ENCODE measurements at regions of chr7 and their contacts with region 1.

Region 1: DNA sequence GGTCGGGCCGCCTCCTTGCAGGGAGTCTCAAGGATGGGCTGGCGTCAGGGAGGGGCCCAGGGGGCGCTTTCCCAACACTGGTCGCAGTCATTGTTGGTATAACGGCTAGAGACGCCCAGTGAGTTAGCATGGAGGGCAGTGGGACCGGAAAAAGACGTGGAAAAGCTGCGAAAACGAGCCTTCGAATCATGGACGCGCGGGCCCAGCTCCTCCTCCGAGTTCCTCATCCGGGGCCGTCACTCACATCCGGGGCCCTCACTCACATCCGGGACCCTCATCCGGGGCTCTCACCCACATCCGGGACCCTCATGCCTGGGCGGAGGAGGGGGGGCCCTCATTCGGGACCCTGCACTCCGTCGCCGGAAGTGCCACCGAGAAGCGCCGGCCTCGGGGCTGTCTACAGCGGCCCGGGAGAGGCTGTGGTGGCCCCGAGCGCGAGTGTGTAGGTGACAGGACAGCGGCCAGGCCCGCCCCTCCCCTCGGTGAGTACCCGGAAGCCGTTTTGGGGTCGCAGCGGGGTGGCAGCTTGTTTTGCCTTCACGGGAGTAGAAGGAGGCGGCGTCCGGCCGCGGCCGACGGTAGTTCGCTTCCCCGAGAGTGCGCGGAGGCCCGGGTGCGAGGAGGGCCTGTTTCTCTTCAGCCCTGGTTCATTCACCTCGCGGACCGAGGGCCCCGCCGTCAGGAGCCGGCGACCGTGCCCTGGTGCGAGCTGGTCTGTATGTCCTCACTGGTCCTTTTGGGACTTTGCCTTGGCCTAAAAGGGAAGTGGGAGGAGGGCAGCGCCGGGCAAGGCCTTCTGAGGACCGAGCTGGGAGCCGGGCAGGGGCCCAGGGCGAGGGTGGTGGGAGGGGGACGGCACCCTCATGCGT is at the start of gene ZNF655:
- DNase-seq: peak; percentile 82 to 98 (median 95)
- ATAC-seq: peak; percentile 85
- H3K4me3 Mint-ChIP-seq: peak within 1 kb of the TSS; percentile 91 to 100 (median 99)
- H3K27ac Mint-ChIP-seq: peak within 1 kb of the TSS; percentile 98 to 100 (median 100)
- H3K4me1 Mint-ChIP-seq: peaks cover 31 to 71% (median 61%) of the 10 kb centered on the region in 4 donors
- H3K27me3 Mint-ChIP-seq: no peaks in the 10 kb centered on the region
- polyA plus RNA-seq, gene ZNF655: 70.3 to 86.3 (median 74.3) TPM

Region 2: GRCh38 chr7:99408379-99409191 is 150.0 kb before region 1 on chr7 and contains the starts of genes BUD31 and PDAP1:
- POLR2A ChIA-PET with region 1: interaction called, 32 read pairs
- DNase-seq: peak; percentile 79 to 100 (median 96)
- ATAC-seq: peak; percentile 82 to 84
- H3K4me3 Mint-ChIP-seq: peak within 1 kb of the TSS; percentile 91 to 100 (median 96)
- H3K27ac Mint-ChIP-seq: peak within 1 kb of the TSS; percentile 94 to 99 (median 98)
- H3K4me1 Mint-ChIP-seq: peaks cover 33 to 74% (median 55%) of the 10 kb centered on the region in 4 donors
- H3K27me3 Mint-ChIP-seq: no peaks in the 10 kb centered on the region
- polyA plus RNA-seq, gene BUD31: 151 to 216 (median 170) TPM
- polyA plus RNA-seq, gene PDAP1: 24.0 to 35.6 (median 33.4) TPM

Region 3: DNA sequence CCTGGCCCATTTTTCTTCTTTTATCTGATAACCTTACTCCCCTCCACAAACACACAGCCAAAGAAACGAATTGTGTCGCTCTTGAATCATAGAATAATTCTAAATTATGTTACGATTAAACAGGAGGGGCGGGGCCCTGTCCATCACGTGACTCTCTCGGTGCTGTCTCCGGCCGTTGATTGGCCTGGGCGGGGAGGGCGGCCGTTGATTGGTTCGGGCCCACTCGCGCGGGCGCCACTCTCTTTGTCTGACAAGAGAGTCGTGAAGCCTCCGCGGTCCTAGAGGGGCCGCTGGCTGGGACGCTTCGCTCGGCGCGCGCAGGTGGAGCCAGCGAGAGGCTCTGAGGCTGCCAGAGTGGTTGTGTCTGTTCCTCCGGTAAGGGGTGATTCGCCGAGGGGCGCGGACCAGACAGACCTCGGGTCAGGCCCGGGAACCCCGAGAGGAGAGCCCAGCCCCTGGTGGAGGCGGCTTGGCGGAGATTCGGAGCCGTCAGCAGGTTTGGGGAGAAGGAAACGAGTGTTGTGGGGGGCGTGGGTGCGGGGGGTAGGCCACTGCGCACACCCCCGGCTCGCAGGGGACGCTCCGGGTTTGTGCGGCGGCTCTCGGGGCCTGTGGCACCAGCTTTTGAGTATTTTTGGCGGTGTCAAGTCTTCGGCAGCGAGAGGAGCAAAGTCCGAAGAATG is 85.8 kb before region 1 on chr7 and contains the start of gene ZNF789:
- POLR2A ChIA-PET with region 1: interaction called, 10 read pairs
- DNase-seq: peak; percentile 89 to 99 (median 97)
- ATAC-seq: peak; percentile 96 to 97
- H3K4me3 Mint-ChIP-seq: peak within 1 kb of the TSS; percentile 91 to 100 (median 97)
- H3K27ac Mint-ChIP-seq: peak within 1 kb of the TSS; percentile 93 to 98 (median 98)
- H3K4me1 Mint-ChIP-seq: peaks cover 18 to 42% (median 32%) of the 10 kb centered on the region in 4 donors
- H3K27me3 Mint-ChIP-seq: no peaks in the 10 kb centered on the region
- polyA plus RNA-seq, gene ZNF789: 7.3 to 8.2 (median 8.0) TPM

Region 4: GRCh38 chr7:99579956-99580777 is 21.6 kb after region 1 on chr7:
- POLR2A ChIA-PET with region 1: interaction called, 37 read pairs
- DNase-seq: peak; percentile 51 to 84 (median 65)
- ATAC-seq: peak; percentile 92
- H3K4me3 Mint-ChIP-seq: peak overlapping the region; percentile 87 to 98 (median 94)
- H3K27ac Mint-ChIP-seq: peak overlapping the region; percentile 80 to 96 (median 94)
- H3K4me1 Mint-ChIP-seq: peaks cover 6 to 19% (median 15%) of the 10 kb centered on the region in 4 donors
- H3K27me3 Mint-ChIP-seq: peaks cover 0 to 2% (median 0%) of the 10 kb centered on the region in 5 donors

Region 5: DNA sequence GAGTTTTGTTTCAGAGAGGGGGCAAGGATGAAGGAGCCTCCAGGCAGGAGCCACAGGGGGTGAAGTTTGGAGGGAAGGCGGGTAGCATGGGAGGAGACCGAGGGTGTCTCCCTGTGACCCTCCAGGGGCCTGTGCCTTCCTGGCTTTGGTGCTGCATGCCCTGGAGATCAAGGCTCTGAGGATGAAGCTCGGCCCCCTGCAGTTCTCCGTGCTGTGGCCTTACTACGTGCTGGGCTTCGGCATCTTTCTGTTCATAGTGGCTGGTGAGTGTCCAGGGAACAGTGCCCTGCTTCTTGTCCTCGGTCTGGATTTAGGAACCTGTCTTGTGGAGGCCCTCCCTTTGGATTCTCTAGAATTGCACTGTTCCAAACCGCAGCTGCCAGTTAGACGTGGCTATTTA is 49.0 kb after region 1 on chr7:
- POLR2A ChIA-PET with region 1: no interaction called
- DNase-seq: no peak
- ATAC-seq: no peak
- H3K4me3 Mint-ChIP-seq: no peak overlapping the region
- H3K27ac Mint-ChIP-seq: peak overlapping the region in 1 of 10 donors; percentile 6
- H3K4me1 Mint-ChIP-seq: peaks cover 0 to 7% (median 0%) of the 10 kb centered on the region in 4 donors
- H3K27me3 Mint-ChIP-seq: no peaks in the 10 kb centered on the region

Region 6: GRCh38 chr7:99624484-99624883 is 65.9 kb after region 1 on chr7:
- POLR2A ChIA-PET with region 1: interaction called, 46 read pairs
- DNase-seq: peak; percentile 53 to 94 (median 86)
- ATAC-seq: peak; percentile 93 to 95
- H3K4me3 Mint-ChIP-seq: peak overlapping the region; percentile 84 to 98 (median 90)
- H3K27ac Mint-ChIP-seq: peak overlapping the region; percentile 93 to 100 (median 99)
- H3K4me1 Mint-ChIP-seq: peaks cover 31 to 60% (median 57%) of the 10 kb centered on the region in 4 donors
- H3K27me3 Mint-ChIP-seq: no peaks in the 10 kb centered on the region

Measured in naive thymus-derived CD8-positive, alpha-beta T cell (primary cell).